ENCODE measurements at regions of chr10 and their contacts with region 1.

Region 1: GRCh38 chr10:28250782-28251181 is 52.1 kb downstream of the MPP7 start:
- DNase-seq: no peak
- H3K4me3 ChIP-seq: no peak overlapping the region
- H3K27ac ChIP-seq: peak overlapping the region in 3 of 4 donors; percentile 11 to 76 (median 69)
- H3K4me1 ChIP-seq: peaks cover 0 to 52% (median 36%) of the 10 kb centered on the region in 4 donors
- H3K27me3 ChIP-seq: no peaks in the 10 kb centered on the region
- CTCF ChIP-seq: peak; percentile 31 to 62 (median 55)
- EP300 ChIP-seq: no peak
- POLR2A ChIP-seq: no peak

Region 2: DNA sequence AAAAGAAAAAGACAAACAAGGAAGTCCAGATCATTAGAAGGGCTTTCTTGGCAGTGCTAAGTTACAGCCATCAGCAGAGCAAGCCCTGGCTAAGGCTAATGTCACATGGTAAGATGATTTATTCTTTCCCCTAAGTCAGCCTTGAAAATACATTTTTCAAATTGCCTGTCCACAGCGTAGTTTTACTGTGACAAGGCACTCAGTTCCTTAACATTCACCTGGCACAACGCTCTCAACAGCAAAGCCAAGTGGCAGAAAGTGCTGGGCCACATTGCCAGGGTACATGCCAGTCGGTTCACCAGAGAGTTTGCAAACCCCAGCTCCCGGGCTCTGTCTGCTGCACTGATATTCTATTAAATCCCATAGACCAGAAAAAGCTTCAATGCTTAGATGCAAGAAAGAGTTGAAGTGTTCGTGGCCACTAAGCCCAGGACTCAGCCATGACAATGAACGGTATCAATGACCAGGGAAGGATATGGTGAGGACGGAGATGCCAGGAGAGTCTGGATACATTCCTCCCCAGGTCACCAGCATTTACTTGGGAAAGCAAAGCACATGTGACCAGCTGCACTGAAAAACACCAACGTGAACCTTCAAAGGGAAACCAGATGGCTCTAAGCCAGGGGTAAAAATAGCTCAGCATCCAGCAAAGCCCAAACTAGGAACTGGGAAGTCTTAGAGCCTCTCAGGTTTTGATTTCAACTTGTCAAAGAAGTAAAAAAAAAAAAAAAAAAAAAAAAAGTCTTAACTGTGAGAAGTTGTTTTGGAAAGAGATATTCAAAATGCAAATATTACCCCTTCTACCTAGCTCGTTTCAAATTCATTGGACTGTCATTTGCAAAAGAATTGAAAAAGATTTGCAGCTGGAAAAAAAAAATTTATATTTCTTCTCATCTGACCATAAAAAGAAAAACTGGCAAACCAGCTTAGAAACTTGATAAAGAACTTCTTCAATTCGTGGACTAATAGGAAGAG is 76.0 kb after region 1 on chr10:
- intact Hi-C with region 1: loop called (anchors 2 kb)
- DNase-seq: peak; percentile 88
- H3K4me3 ChIP-seq: peak overlapping the region in 2 of 4 donors; percentile 22 to 26
- H3K27ac ChIP-seq: peak overlapping the region; percentile 86 to 90 (median 88)
- H3K4me1 ChIP-seq: peaks cover 0 to 65% (median 52%) of the 10 kb centered on the region in 4 donors
- H3K27me3 ChIP-seq: no peaks in the 10 kb centered on the region
- CTCF ChIP-seq: no peak
- EP300 ChIP-seq: peak; percentile 21 to 87 (median 46)
- POLR2A ChIP-seq: no peak

Region 3: DNA sequence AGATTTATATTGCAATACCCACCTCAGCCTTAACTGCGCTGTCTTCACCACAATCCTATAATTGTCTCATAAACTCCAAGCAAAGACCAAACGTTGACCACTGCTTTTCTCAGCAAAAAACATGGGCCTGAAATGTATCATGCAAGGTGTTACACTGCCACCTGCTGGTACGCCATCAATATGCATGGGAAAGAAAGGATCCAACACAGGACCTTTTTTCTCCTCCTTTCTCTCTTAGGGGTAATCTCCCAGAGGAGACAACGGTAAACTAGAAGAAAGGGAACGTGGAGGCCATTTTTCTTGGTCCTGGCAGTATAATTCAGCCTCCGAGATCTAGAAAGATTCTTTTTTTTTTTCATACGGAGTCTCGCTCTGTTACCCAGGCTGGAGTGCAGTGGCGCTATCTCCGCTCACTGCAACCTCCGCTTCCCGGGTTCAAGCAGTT is 131.1 kb after region 1 on chr10:
- intact Hi-C with region 1: loop called (anchors 1 kb)
- DNase-seq: peak; percentile 92
- H3K4me3 ChIP-seq: no peak overlapping the region
- H3K27ac ChIP-seq: peak overlapping the region in 1 of 4 donors; percentile 1
- H3K4me1 ChIP-seq: peaks cover 0 to 4% (median 1%) of the 10 kb centered on the region in 4 donors
- H3K27me3 ChIP-seq: no peaks in the 10 kb centered on the region
- CTCF ChIP-seq: peak; percentile 92 to 98 (median 96)
- EP300 ChIP-seq: no peak
- POLR2A ChIP-seq: no peak

Measured in sigmoid colon (tissue), 7 donors.